ENCODE measurements at regions of chr13 and their contacts with region 1.

Region 1: DNA sequence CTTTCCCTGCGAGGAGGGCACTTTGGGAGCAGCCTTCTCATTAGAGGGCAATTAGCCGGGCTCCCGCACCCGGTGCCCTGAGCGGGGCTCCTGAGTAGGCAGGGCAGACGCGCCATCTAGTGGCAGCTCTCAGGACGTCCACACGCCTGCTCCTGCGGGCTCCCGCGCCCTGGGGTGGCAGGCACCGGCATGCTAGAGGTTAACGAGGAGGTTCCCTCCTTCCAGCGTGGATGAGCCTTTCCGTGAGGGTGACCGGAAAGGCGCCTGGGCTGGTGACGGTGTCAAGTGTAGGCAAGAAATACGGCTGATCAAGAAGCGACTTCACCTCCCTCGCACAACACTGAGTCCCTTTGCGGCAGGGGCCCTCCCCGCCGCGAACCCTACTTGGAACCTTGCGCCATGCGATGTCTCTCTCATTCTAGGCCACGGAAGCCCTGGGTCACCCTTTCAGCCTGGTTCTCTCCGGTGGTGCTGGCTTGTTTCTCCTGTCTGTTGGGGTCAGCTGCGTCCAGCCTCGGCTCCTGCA is 67.7 kb downstream of the ALOX5AP start:
- DNase-seq: peak; percentile 85 to 91
- H3K4me3 ChIP-seq: peak overlapping the region; percentile 41 to 47
- H3K27ac ChIP-seq: peak overlapping the region; percentile 41 to 65
- H3K4me1 ChIP-seq: peaks cover 0 to 34% (median 15%) of the 10 kb centered on the region in 4 donors
- H3K27me3 ChIP-seq: no peaks in the 10 kb centered on the region
- CTCF ChIP-seq: peak; percentile 93 to 96

Region 2: DNA sequence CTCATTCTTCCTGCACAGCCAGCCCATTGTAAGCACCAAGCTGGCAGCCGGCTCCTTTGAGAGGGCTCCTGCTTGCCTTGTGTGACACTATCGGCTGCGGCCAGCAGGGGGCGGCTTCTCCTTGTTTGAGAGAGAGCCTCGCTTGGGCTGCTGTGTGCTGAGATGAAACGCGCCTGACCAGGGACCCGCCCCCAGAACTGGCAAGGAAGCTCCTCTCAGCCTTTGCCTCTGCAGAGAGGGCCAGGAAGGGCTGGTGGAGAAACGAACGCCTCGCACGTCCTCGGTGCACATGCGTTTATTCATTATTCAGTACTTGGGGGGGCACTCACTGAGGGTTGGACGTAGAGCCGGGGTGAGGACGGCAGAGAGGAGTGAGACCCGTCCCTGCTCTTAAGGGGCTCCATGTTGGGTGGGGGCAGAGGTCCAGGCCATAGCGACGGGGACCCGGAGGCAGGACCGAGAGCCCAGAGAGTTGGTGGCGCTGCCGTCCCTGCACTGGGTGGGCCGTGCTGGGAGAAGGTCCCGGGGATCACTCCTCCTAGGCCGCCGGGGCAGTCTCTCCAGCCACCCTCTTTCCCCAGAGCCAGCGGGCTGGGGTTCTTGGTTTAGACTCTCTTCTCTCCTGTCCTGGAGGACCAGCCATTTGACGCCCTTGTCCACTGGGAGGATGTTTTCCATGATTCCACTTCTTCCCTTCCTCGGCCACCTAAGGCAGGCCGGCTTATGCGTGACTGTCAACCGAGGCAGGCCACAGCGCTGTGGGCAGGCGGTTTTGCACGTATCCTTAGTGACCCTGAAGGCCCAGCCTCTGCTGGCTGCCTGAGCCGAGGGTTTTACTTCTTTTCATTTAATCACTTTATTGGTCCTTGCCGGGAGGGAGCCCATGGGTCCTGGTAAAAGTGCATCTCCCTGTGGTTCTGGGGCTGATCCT is 670.1 kb before region 1 on chr13:
- intact Hi-C with region 1: loop called (anchors 5 kb)
- DNase-seq: peak; percentile 97 to 99
- H3K4me3 ChIP-seq: no peak overlapping the region
- H3K27ac ChIP-seq: no peak overlapping the region
- H3K4me1 ChIP-seq: peaks cover 0 to 21% (median 11%) of the 10 kb centered on the region in 4 donors
- H3K27me3 ChIP-seq: no peaks in the 10 kb centered on the region
- CTCF ChIP-seq: peak; percentile 90 to 95

Region 3: DNA sequence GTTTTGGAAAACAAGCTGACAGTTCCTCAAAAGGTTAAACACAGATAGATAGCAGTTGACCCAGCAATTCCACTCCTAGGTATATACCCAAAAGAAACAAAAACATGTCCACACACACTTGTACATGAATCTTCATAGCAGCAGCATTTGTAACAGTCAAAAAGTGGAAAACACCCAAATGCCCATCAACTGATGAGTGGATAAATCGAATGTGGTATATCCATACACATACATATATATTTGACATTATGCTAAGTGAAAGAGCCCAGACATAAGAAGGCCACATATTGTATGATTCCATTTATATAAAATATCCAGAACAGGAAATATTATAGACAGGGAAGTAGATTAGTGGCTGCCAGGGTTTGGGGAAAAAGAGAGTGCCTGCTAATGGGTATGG is 329.3 kb before region 1 on chr13:
- intact Hi-C with region 1: loop called (anchors 5 kb)
- DNase-seq: no peak
- H3K4me3 ChIP-seq: no peak overlapping the region
- H3K27ac ChIP-seq: no peak overlapping the region
- H3K4me1 ChIP-seq: no peaks in the 10 kb centered on the region
- H3K27me3 ChIP-seq: no peaks in the 10 kb centered on the region
- CTCF ChIP-seq: no peak

Region 4: DNA sequence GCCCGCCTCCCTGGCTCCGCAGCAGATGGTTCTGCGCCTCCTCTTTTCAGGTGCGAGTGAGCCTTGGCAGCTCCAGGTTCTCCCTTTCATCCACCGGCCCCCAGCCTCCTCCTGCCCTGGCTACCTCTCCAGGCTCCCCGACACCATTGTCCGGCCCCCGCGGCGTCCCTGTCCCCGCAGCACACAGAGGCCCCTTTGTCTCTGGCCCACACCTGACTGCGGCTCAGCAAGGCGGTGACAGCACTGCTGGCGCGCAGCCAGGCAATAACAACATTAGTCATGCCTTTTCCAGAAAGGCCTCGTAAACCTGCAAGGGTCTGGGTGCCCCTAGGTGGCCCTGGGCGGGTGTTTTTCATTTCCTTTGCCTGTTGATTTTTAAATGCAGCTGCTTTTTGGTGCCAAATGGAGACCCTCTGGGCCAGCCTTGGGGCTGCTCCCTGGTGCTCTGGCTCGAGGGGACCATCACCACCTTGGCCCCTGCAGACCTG is 29.9 kb after region 1 on chr13:
- intact Hi-C with region 1: no loop called
- DNase-seq: no peak
- H3K4me3 ChIP-seq: no peak overlapping the region
- H3K27ac ChIP-seq: no peak overlapping the region
- H3K4me1 ChIP-seq: peaks cover 0 to 8% (median 3%) of the 10 kb centered on the region in 4 donors
- H3K27me3 ChIP-seq: peaks cover 0 to 13% of the 10 kb centered on the region in 2 donors
- CTCF ChIP-seq: no peak

Region 5: DNA sequence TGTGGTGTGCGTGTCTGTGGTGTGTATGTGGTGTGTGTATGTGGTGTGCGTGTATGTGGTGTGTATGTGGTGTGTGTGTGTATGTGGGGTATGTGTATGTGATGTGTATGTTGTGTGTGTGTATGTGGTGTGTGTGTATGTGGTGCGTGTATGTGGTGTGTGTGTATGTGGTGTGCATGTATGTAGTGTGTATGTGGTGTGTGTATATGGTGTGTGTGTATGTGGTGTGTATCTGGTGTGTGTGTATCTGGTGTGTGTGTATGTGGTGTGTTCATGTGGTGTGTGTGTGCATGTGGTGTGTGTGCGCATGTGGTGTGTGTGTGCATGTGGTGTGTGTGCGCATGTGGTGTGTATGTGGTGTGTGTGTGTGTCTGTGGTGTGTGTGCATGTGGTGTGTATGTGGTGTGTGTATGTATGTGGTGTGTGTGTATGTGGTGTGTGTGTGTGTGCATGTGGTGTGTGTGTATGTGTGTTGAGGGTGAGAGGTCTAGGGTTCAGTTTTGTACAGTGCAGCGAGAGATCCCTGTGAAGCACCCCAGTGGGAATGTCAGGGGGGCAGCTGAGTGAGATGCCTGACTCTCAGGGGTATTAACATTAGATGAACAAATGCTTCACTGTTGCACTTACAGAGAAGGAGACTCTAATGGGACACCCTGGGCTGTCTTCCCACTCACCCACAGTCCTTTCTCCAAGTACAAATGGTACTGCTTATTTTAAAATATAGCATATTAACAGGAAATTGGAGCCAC is 41.7 kb after region 1 on chr13:
- intact Hi-C with region 1: loop called (anchors 5 kb)
- DNase-seq: no peak
- H3K4me3 ChIP-seq: no peak overlapping the region
- H3K27ac ChIP-seq: no peak overlapping the region
- H3K4me1 ChIP-seq: peaks cover 0 to 17% (median 11%) of the 10 kb centered on the region in 4 donors
- H3K27me3 ChIP-seq: no peaks in the 10 kb centered on the region
- CTCF ChIP-seq: no peak

Region 6: DNA sequence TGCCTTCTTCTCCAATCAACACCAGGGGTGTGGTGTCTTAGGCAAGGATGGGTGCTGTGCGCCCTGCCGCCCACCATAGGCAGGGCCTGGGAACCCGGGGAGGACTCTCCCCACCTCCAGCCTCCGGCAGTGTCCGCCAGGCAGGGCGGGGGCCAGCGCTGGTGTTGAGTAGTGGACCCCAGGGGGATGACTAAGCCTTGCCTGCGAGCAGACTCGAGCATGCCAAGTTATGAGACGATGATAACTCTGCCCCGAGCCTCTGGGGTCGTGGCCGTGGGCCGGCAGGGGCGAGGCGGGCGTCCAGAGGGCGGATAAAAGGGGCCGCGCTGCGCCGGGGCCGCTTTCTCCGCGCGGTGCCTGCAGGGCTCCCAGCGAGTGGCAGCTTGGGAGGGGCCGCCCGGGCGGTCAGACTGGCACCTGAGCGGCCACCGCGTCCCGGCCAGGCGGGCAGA is 102.9 kb after region 1 on chr13 and contains the start of gene MEDAG:
- intact Hi-C with region 1: loop called (anchors 10 kb)
- DNase-seq: peak; percentile 93 to 95
- H3K4me3 ChIP-seq: peak within 1 kb of the TSS; percentile 60 to 69
- H3K27ac ChIP-seq: peak within 1 kb of the TSS; percentile 92 to 96
- H3K4me1 ChIP-seq: peaks cover 0 to 59% (median 27%) of the 10 kb centered on the region in 4 donors
- H3K27me3 ChIP-seq: no peaks in the 10 kb centered on the region
- CTCF ChIP-seq: peak in 1 of 2 experiments; percentile 7

Region 7: DNA sequence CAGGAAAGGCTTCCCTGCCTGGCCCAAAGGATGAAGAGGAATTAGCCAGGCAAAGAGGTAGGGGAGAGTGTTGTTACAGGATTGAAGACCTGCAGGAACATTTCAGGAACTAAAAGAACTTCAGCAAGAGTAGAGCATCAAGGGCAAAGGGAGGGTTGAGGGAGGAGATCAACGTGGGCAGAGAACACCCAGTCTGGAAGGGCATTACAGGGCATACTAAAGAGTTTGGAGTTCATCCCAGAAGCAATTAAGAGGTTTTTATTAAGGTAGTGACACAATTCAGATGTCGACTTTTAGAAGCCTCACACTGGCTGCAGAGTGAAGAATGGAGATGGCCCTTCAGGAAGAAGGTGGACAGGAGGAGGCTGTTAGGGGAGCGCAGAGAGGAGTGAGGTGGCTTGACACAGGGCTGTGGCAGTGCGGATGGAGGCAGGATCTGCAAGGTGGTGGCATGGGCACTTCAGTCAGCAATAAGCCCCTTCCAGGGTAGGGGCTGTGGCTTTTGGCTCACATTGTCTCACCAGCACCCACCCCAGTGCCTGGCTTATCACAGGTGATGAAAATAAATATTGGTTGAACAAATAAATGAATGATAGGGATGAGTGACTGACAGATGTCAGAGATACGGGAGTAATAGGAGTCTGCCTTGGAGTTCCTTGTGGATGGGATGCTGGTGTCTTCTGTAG is 154.4 kb after region 1 on chr13:
- intact Hi-C with region 1: no loop called
- DNase-seq: no peak
- H3K4me3 ChIP-seq: no peak overlapping the region
- H3K27ac ChIP-seq: no peak overlapping the region
- H3K4me1 ChIP-seq: no peaks in the 10 kb centered on the region
- H3K27me3 ChIP-seq: no peaks in the 10 kb centered on the region
- CTCF ChIP-seq: no peak

Measured in tibial artery (tissue), 4 donors.